AG04449 (cell line): ENCODE measurements at regions of chr19 and their contacts with region 1.

Region 1: DNA sequence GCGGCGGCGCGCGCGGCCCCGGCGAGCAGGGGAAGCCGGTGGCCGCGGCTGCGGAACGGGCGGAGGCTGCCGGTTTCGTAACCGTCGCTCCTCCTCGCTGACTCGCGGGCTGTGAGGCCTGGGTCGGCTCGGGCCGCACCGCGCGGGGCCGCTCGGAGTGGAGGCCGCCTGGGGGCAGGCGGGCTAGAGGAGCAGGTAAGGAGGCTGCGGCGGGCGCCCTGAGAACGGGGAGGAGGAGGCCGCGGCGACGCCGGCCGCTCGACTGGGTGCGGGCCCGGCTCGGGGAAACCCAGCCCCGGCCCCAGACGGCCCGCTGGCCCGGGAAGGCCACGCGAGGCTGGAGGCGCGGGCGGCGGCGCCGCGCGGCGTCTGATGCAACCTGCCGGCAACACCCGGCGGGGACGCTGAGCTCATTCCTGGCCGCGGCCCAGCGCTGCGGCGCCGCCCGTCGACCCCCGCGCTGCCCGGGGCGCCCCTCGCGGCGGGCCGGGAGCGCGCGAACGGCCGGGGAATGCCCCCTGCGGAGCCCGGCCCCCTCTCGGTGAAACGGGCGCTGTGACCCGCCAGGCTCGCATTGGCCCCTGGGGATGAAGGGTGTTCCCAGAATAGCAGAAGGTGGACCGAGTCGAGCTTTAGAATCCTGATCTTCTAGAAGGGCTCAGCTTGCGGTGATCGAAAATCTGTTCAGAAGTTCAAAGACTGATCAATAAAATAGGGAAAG is at the start of gene CEBPG:
- DNase-seq: no peak
- H3K4me3 ChIP-seq: peak within 1 kb of the TSS; percentile 90
- CTCF ChIP-seq: peak; percentile 30

Region 2: DNA sequence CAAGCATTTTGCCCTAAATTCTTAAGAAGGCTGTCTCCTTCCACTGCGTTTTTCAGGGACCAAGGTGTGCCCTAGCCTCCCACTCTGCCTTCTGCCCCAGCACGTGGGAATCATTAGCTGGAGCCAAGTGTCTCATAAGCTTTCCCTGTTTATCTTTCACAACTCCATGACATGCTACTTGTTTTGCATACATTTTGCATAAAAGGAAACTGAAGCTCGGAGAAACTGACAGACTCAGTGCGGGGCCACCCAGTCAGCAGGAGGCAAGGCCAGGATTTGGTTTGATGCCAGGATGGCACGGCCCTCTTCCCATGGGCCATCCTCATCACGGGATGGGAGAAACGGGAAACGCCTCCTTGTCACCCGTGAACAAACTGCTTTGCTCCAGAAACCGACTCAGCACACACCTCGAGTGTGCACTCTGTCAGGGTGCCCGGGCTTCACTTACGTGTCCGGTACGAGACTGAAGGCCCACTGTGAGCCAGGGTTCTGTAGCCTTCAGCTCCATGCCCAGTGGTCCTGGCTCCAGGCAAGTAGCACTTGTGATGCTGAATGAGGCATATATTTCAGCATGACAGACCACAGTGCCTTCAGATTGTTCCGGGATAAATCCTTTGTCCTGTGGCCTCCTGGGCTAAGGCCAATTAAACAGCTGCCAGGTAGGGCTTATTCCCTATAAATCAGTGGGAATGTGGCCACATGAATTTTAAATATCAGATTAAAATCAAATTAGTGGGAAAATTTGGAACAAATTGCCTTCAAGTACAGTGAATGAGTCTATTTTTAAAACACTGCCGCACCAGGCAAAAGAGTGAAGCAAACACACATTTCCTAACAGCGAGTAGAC is 81.0 kb before region 1 on chr19:
- CTCF ChIA-PET with region 1: no interaction called
- POLR2A ChIA-PET with region 1: no interaction called
- DNase-seq: no peak
- H3K4me3 ChIP-seq: no peak overlapping the region
- CTCF ChIP-seq: no peak

Region 3: GRCh38 chr19:33385956-33386355 is 12.1 kb after region 1 on chr19:
- CTCF ChIA-PET with region 1: interaction called, 17 read pairs
- POLR2A ChIA-PET with region 1: interaction called, 4 read pairs
- DNase-seq: no peak
- H3K4me3 ChIP-seq: no peak overlapping the region
- CTCF ChIP-seq: no peak